GM18951 (cell line): ENCODE measurements at regions of chr2 and their contacts with region 1.

Region 1: GRCh38 chr2:165203689-165204559 is at the start of gene SCN3A:
- POLR2A ChIP-seq: no peak

Region 2: GRCh38 chr2:164697674-164698461 is 506.1 kb before region 1 on chr2:
- in situ Hi-C with region 1: no loop called
- POLR2A ChIP-seq: no peak

Region 3: DNA sequence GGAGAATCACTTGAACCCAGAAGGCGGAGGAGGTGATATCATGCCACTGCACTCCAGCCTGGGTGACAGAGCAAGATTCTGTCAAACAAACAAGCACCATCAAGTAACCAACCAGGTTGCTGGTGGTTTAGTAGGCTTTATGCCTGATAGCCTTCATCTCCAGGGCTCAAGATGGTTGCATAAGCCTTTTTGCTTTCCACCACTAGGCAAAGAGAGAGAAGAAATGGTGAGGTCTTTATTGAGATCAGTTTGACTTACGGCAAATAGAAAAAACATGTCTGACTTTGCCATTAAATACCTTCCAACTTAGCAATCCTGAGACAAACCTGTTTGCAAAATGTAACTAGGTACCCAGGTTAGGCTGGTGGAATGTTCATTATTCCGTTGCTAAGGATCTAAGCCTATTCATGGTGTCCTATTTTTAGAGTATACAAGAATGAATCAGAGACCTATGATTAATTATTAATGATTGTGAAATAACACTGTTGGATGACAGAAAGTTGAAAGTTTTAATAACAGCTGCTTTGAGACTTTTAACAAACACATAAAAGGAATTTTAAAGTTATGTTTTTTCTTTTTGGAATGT is 195.1 kb before region 1 on chr2:
- in situ Hi-C with region 1: loop called (anchors 10 kb)
- POLR2A ChIP-seq: no peak

Region 4: DNA sequence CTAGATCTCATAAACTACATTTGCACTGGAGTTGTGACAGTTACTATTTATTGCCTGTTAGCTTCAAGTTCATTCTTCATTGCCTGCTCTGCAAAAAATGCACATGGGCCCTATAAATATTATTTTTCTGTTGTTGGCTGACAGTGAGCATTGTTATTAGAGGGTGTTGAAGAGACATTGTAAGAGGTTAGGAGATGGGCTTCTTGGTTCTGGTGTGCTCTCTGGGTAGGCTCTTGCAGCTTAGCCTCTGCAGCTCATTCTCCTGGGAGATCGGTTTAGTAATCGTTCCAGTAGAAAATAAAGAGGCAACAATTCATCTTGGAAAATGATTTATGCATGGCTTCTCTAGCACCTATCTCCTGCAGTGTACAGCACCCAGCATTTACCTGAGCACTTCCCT is 1404.0 kb after region 1 on chr2:
- in situ Hi-C with region 1: no loop called
- POLR2A ChIP-seq: no peak